Heart right ventricle (tissue), 16 donors: ENCODE measurements at regions of chr20 and their contacts with region 1.

Region 1: GRCh38 chr20:2109425-2110210 is 8.0 kb downstream of the STK35 start:
- DNase-seq: peak; percentile 67 to 72
- ATAC-seq: peak; percentile 43 to 87 (median 76)
- H3K4me3 ChIP-seq: no peak overlapping the region
- H3K27ac ChIP-seq: peak overlapping the region; percentile 32 to 83 (median 69)
- H3K4me1 ChIP-seq: peaks cover 10 to 100% (median 94%) of the 10 kb centered on the region in 9 donors
- H3K27me3 ChIP-seq: no peaks in the 10 kb centered on the region
- CTCF ChIP-seq: no peak

Region 2: DNA sequence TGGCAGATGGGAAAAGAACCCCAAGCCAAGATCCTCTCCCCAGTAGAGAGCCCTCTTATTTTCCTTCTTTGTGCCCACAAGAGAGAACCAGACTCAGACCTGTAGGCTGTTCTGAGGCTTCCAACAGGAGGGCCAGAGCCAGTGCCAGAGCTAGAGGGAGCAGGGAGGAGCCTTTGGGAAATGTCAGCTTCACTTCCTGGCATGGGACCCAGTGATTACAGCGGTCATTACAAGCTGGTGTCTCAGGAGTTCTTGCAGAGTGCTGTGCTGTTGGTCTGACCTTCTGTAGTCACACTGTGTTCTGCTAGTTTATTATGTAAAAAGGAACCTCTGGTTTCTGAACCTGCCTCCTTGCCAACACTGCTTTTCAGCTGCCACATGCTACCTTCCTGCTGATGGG is 30.9 kb after region 1 on chr20:
- intact Hi-C with region 1: loop called in 6 of 10 experiments (anchors 5 kb)
- DNase-seq: peak; percentile 54 to 80
- ATAC-seq: peak; percentile 81 to 92 (median 84)
- H3K4me3 ChIP-seq: no peak overlapping the region
- H3K27ac ChIP-seq: peak overlapping the region; percentile 62 to 90 (median 80)
- H3K4me1 ChIP-seq: peaks cover 34 to 96% (median 75%) of the 10 kb centered on the region in 9 donors
- H3K27me3 ChIP-seq: no peaks in the 10 kb centered on the region
- CTCF ChIP-seq: no peak

Region 3: GRCh38 chr20:2149507-2149906 is 39.9 kb after region 1 on chr20:
- intact Hi-C with region 1: loop called in 6 of 10 experiments (anchors 5 kb)
- DNase-seq: no peak
- ATAC-seq: no peak
- H3K4me3 ChIP-seq: no peak overlapping the region
- H3K27ac ChIP-seq: no peak overlapping the region
- H3K4me1 ChIP-seq: peaks cover 5 to 42% (median 19%) of the 10 kb centered on the region in 9 donors
- H3K27me3 ChIP-seq: no peaks in the 10 kb centered on the region
- CTCF ChIP-seq: no peak

Region 4: DNA sequence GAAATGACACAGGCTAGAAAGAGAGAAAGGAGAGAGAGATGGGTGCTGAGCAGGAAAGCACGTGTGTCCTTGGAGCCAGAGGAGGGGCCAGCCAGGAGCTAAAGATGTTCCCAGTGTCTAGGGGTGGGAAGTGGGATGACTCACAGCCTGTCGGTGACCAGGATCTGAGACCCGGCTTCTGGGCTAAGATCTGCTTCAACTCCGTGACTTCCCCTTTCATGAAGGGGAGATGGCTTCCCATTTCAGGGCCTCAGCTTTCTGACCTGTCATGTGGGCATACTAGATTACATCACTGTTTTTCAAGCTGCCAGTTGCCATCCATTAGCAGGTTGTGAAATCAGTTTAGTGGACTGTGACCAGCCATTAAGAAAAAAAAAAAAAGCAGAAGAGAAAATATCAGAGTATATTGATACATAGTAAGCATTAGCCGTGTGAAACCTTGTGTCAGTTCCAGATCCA is 191.6 kb after region 1 on chr20:
- intact Hi-C with region 1: no loop called
- DNase-seq: peak in 1 of 2 donors; percentile 42
- ATAC-seq: peak; percentile 38 to 80 (median 72)
- H3K4me3 ChIP-seq: no peak overlapping the region
- H3K27ac ChIP-seq: peak overlapping the region in 2 of 10 donors; percentile 12 to 87
- H3K4me1 ChIP-seq: peaks cover 0 to 36% (median 0%) of the 10 kb centered on the region in 9 donors
- H3K27me3 ChIP-seq: peaks cover 0 to 48% (median 17%) of the 10 kb centered on the region in 7 donors
- CTCF ChIP-seq: no peak